PC-3 (cell line): ENCODE measurements at regions of chr5 and their contacts with region 1.

Region 1: GRCh38 chr5:160342403-160342941 is 28.0 kb downstream of the C1QTNF2 start:
- DNase-seq: peak; percentile 59
- ATAC-seq: peak; percentile 42
- H3K4me3 ChIP-seq: no peak overlapping the region
- H3K27ac ChIP-seq: no peak overlapping the region
- H3K4me1 ChIP-seq: peaks cover 6% of the 10 kb centered on the region; the same call in 1 of the 2 replicates
- H3K27me3 ChIP-seq: no peaks in the 10 kb centered on the region
- CTCF ChIP-seq: no peak

Region 2: GRCh38 chr5:160159991-160160792 is 182.3 kb before region 1 on chr5:
- CTCF ChIA-PET with region 1: no interaction called
- POLR2A ChIA-PET with region 1: no interaction called
- intact Hi-C with region 1: no loop called
- DNase-seq: no peak
- ATAC-seq: no peak
- H3K4me3 ChIP-seq: no peak overlapping the region
- H3K27ac ChIP-seq: no peak overlapping the region
- H3K4me1 ChIP-seq: peaks cover 13% of the 10 kb centered on the region
- H3K27me3 ChIP-seq: no peaks in the 10 kb centered on the region
- CTCF ChIP-seq: no peak

Region 3: DNA sequence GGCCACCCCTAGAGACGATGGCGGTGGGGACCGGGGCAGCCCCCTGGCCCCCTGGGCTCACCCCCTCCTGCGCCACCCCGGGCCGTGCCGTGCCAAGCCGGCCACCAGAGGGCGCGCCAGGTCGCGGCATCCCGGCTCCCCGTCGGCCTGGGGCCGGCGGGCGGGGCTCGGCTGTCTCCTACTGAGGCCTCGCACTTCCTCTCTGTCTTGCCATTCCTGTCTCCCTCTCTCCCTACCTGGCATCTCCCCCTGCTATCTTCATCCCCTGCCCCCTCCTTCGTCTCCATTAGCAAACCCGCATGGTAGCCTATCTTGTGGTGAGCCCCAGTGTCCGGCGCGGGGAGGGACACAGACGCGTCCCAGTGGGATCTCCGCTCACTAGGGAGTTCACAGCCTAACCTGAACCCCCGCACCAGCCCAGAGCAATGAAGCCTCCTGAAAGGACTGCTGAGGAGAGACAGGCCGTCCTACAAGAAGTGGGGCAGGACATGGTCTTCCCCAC is 143.0 kb before region 1 on chr5:
- CTCF ChIA-PET with region 1: interaction called, 4 read pairs
- POLR2A ChIA-PET with region 1: no interaction called
- intact Hi-C with region 1: loop called (anchors 1 kb)
- DNase-seq: peak; percentile 76
- ATAC-seq: peak; percentile 100
- H3K4me3 ChIP-seq: peak overlapping the region; percentile 61
- H3K27ac ChIP-seq: no peak overlapping the region
- H3K4me1 ChIP-seq: peaks cover 4% of the 10 kb centered on the region; the same call in 1 of the 2 replicates
- H3K27me3 ChIP-seq: no peaks in the 10 kb centered on the region
- CTCF ChIP-seq: peak; percentile 95

Region 4: GRCh38 chr5:160245506-160246086 is 96.9 kb before region 1 on chr5:
- CTCF ChIA-PET with region 1: no interaction called
- POLR2A ChIA-PET with region 1: no interaction called
- intact Hi-C with region 1: loop called (anchors 1 kb)
- DNase-seq: no peak
- ATAC-seq: no peak
- H3K4me3 ChIP-seq: no peak overlapping the region
- H3K27ac ChIP-seq: no peak overlapping the region
- H3K4me1 ChIP-seq: no peaks in the 10 kb centered on the region
- H3K27me3 ChIP-seq: no peaks in the 10 kb centered on the region
- CTCF ChIP-seq: no peak

Region 5: GRCh38 chr5:160260881-160261815 is 81.3 kb before region 1 on chr5:
- CTCF ChIA-PET with region 1: interaction called, 5 read pairs
- POLR2A ChIA-PET with region 1: interaction called, 18 read pairs
- intact Hi-C with region 1: no loop called
- DNase-seq: peak; percentile 27
- ATAC-seq: no peak
- H3K4me3 ChIP-seq: no peak overlapping the region
- H3K27ac ChIP-seq: peak overlapping the region; percentile 61
- H3K4me1 ChIP-seq: no peaks in the 10 kb centered on the region
- H3K27me3 ChIP-seq: no peaks in the 10 kb centered on the region
- CTCF ChIP-seq: no peak

Region 6: DNA sequence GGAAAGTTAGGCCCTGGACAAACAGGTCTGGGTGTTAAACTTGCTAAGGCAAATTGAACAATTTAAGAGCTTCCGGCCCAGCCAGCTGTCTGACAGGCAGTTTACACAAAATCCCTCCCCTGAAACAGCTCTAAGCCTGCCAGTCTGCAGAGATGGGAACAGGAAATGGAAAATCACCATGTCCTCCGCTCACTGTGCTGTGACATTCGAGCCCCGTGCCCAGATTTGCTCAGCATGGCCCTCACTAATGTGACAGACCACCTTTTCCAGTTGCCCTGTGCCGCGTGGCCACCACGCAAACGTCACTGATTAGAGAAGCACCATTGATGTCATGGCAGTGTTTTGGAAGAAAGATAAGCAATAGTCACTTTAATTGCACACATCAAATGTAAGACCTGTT is 71.1 kb before region 1 on chr5:
- CTCF ChIA-PET with region 1: no interaction called
- POLR2A ChIA-PET with region 1: no interaction called
- intact Hi-C with region 1: loop called (anchors 2 kb)
- DNase-seq: no peak
- ATAC-seq: peak; percentile 37
- H3K4me3 ChIP-seq: no peak overlapping the region
- H3K27ac ChIP-seq: no peak overlapping the region
- H3K4me1 ChIP-seq: no peaks in the 10 kb centered on the region
- H3K27me3 ChIP-seq: no peaks in the 10 kb centered on the region
- CTCF ChIP-seq: no peak

Region 7: DNA sequence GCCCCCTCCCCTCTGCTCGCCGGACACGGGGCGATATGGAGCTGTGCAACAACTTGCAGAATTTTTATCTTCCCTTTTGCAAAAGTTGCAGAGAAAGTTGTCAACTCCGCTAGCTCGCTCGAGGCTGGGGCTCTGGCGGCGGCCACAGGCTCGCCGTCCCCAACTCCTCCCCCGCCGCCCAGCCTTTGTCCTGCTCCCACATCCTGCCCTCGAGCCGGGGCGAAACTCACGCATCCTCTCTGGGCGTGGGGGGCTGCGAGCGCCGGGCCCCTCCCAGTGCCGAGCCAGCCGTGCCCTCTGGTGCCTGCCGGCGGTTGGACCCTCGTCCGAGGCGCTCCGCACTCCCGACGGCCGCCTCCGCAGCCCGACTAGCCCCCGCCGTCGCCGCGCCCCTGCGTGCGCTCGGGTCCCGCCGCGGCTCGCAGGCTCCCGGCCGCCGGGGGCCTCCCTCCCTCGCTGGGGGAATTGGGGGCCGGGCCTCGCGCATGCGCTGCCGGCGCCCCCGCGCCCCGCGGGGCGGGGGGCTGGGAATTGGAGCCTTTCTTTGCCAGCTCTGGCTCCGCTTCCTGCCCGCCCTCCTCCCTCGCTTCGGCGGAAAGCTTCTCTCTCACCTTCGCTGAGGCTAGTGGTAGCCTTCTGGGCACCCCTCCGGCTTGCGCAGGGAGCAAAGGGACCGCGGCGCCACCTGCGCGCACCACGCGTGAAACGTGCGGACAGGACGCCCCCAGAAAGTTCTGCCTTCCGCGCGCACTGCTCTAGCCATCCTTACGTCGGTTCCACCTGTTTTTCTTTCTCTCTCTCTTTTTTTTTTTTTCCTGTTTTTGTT is 30.1 kb before region 1 on chr5 and contains the start of gene CCNJL:
- CTCF ChIA-PET with region 1: interaction called, 16 read pairs
- POLR2A ChIA-PET with region 1: interaction called, 3 read pairs
- intact Hi-C with region 1: loop called (anchors 1 kb)
- DNase-seq: peak; percentile 74
- ATAC-seq: peak; percentile 39
- H3K4me3 ChIP-seq: peak within 1 kb of the TSS; percentile 75
- H3K27ac ChIP-seq: peak within 1 kb of the TSS; percentile 25; the same call in 1 of the 2 replicates
- H3K4me1 ChIP-seq: peaks cover 36% of the 10 kb centered on the region
- H3K27me3 ChIP-seq: no peaks in the 10 kb centered on the region
- CTCF ChIP-seq: no peak
- total RNA-seq, gene CCNJL: 7.7 and 9.3 TPM in 2 replicates

Region 8: GRCh38 chr5:160390787-160391696 is 48.6 kb after region 1 on chr5:
- CTCF ChIA-PET with region 1: no interaction called
- POLR2A ChIA-PET with region 1: no interaction called
- intact Hi-C with region 1: loop called (anchors 1 kb)
- DNase-seq: peak; percentile 53
- ATAC-seq: peak; percentile 50; the same call in 1 of the 2 replicates
- H3K4me3 ChIP-seq: no peak overlapping the region
- H3K27ac ChIP-seq: no peak overlapping the region
- H3K4me1 ChIP-seq: no peaks in the 10 kb centered on the region
- H3K27me3 ChIP-seq: no peaks in the 10 kb centered on the region
- CTCF ChIP-seq: peak; percentile 78